Tibial artery (tissue), 4 donors: ENCODE measurements at regions of chr3 and their contacts with region 1.

Region 1: DNA sequence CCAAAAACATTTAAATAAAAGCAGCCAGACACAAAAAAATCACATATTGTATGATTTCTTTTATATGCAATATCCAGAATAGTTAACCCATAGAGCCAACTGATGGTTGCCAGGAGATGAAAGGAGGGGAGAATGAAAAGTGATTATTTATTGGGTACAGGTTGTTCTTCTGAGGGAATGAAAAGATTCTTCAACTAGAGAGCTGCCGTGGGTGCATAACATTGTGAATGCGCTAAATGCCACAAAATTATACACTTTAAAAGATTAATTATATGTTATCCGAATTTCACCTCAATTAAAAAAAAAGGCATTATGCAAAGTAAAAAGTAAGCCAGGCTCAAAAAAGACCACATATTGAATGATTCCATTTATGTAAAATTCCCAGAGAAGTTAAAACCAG is 36.1 kb downstream of the PRKAR2A start:
- DNase-seq: no peak
- H3K4me3 ChIP-seq: no peak overlapping the region
- H3K27ac ChIP-seq: no peak overlapping the region
- H3K4me1 ChIP-seq: peaks cover 0 to 5% (median 2%) of the 10 kb centered on the region in 4 donors
- H3K27me3 ChIP-seq: no peaks in the 10 kb centered on the region
- CTCF ChIP-seq: no peak

Region 2: GRCh38 chr3:48826451-48826850 is 14.9 kb after region 1 on chr3:
- intact Hi-C with region 1: loop called (anchors 1 kb)
- DNase-seq: no peak
- H3K4me3 ChIP-seq: no peak overlapping the region
- H3K27ac ChIP-seq: peak overlapping the region; percentile 11 to 23
- H3K4me1 ChIP-seq: peaks cover 0 to 50% (median 8%) of the 10 kb centered on the region in 4 donors
- H3K27me3 ChIP-seq: no peaks in the 10 kb centered on the region
- CTCF ChIP-seq: no peak

Region 3: GRCh38 chr3:49007068-49007770 is 195.7 kb after region 1 on chr3 and contains the start of gene WDR6:
- intact Hi-C with region 1: no loop called
- DNase-seq: peak; percentile 98 to 99
- H3K4me3 ChIP-seq: peak within 1 kb of the TSS; percentile 72 to 77
- H3K27ac ChIP-seq: peak within 1 kb of the TSS; percentile 92 to 97
- H3K4me1 ChIP-seq: peaks cover 0 to 23% (median 18%) of the 10 kb centered on the region in 4 donors
- H3K27me3 ChIP-seq: no peaks in the 10 kb centered on the region
- CTCF ChIP-seq: peak; percentile 14 to 39